Activated CD4-positive, alpha-beta T cell treated with anti-CD3 and anti-CD28 coated beads for 36 hours (primary cell): ENCODE measurements at regions of chr14 and their contacts with region 1.

Region 1: DNA sequence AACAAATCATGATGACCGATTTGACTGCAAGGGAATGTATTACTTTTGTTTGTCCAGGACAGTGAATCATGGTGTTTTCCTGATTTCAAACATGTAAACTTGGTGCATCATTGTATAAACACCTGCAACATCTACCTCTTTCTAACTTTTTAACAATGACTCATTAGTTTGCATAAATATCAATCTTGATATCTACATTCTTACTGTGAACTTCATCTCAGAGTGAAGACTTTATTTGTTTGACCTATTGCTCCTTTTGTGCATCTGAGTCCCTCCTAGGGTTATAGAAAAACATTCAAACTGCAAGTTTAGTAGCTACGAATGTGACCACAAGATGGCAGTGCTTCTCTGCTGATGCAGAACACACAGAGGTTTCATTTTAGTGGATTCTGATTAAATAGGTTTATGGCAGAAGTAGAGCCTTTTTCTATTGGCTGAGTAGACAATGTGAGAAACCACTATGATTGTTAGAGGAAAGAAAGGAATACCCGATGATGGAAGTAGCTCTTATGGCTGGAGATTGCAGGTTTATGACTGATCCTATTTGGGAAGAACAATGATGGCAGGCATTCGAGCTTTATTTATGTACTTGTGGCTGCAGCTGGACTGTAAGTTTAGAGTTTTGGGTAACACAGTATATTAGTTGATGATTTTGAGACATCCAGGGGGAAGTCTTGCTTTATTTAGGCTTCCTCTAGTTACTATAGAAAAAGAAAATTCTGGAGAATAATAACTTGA is 244.2 kb upstream of the OR4E1 start:
- DNase-seq: peak; percentile 74
- ATAC-seq: peak; percentile 57
- H3K4me3 Mint-ChIP-seq: peak overlapping the region; percentile 65
- H3K27ac Mint-ChIP-seq: peak overlapping the region; percentile 69
- H3K4me1 Mint-ChIP-seq: peaks cover 57% of the 10 kb centered on the region
- H3K27me3 Mint-ChIP-seq: no peaks in the 10 kb centered on the region

Region 2: GRCh38 chr14:21902650-21903103 is 15.2 kb before region 1 on chr14:
- CTCF ChIA-PET with region 1: interaction called, 19 read pairs
- POLR2A ChIA-PET with region 1: no interaction called
- intact Hi-C with region 1: no loop called
- DNase-seq: peak; percentile 68
- ATAC-seq: peak; percentile 95
- H3K4me3 Mint-ChIP-seq: peak overlapping the region; percentile 73
- H3K27ac Mint-ChIP-seq: peak overlapping the region; percentile 72
- H3K4me1 Mint-ChIP-seq: peaks cover 18% of the 10 kb centered on the region
- H3K27me3 Mint-ChIP-seq: no peaks in the 10 kb centered on the region

Region 3: GRCh38 chr14:21987937-21988336 is 70.1 kb after region 1 on chr14:
- CTCF ChIA-PET with region 1: interaction called, 22 read pairs
- POLR2A ChIA-PET with region 1: no interaction called
- intact Hi-C with region 1: loop called in 1 of 2 experiments (anchors 5 kb)
- DNase-seq: peak; percentile 25
- ATAC-seq: peak; percentile 72
- H3K4me3 Mint-ChIP-seq: peak overlapping the region; percentile 57
- H3K27ac Mint-ChIP-seq: peak overlapping the region; percentile 86
- H3K4me1 Mint-ChIP-seq: peaks cover 28% of the 10 kb centered on the region
- H3K27me3 Mint-ChIP-seq: peaks cover 2% of the 10 kb centered on the region

Region 4: GRCh38 chr14:22084393-22085281 is 166.8 kb after region 1 on chr14:
- CTCF ChIA-PET with region 1: no interaction called
- POLR2A ChIA-PET with region 1: no interaction called
- intact Hi-C with region 1: loop called in 1 of 2 experiments (anchors 5 kb)
- DNase-seq: no peak
- ATAC-seq: peak; percentile 63
- H3K4me3 Mint-ChIP-seq: peak overlapping the region; percentile 65
- H3K27ac Mint-ChIP-seq: peak overlapping the region; percentile 74
- H3K4me1 Mint-ChIP-seq: peaks cover 24% of the 10 kb centered on the region
- H3K27me3 Mint-ChIP-seq: no peaks in the 10 kb centered on the region

Region 5: DNA sequence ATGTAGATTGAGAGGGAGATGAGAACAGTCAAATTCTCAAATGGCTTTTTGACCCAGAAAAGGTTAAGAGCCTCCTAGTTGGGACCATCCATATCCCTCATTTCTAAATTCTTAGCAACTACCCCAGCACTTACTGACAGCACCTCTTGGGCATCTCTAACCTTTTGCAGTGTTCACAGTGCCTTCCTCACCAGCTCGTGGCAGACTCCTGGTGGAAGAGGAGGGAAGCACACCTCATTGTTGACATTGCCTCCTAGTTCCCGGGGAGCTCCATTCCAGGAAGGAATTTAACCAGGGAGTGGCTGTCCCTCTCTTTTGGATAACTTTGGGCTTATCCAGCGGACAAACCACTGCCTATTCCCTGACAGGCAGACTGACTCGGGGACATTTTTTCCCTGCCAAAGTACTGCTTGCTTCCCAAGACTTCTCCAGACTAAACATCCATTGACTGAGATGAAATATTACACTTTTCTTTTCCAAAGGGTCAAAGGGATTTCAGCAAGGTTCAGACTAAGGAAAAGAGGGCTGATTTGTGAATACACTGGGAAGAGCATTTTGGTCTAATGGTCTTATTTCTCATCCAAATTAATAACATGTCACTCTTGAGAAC is 735.2 kb after region 1 on chr14:
- CTCF ChIA-PET with region 1: interaction called, 3 read pairs
- POLR2A ChIA-PET with region 1: no interaction called
- intact Hi-C with region 1: loop called in 1 of 2 experiments (anchors 10 kb)
- DNase-seq: peak; percentile 75
- ATAC-seq: peak; percentile 80
- H3K4me3 Mint-ChIP-seq: no peak overlapping the region
- H3K27ac Mint-ChIP-seq: no peak overlapping the region
- H3K4me1 Mint-ChIP-seq: no peaks in the 10 kb centered on the region
- H3K27me3 Mint-ChIP-seq: no peaks in the 10 kb centered on the region